Vagina (tissue), 2 donors: ENCODE measurements at regions of chr11 and their contacts with region 1.

Region 1: GRCh38 chr11:117107701-117108590 is 9.7 kb upstream of the SIK3 start:
- DNase-seq: no peak
- H3K4me3 ChIP-seq: no peak overlapping the region
- H3K27ac ChIP-seq: no peak overlapping the region
- H3K4me1 ChIP-seq: no peaks in the 10 kb centered on the region
- H3K27me3 ChIP-seq: no peaks in the 10 kb centered on the region
- CTCF ChIP-seq: no peak
- POLR2A ChIP-seq: no peak

Region 2: DNA sequence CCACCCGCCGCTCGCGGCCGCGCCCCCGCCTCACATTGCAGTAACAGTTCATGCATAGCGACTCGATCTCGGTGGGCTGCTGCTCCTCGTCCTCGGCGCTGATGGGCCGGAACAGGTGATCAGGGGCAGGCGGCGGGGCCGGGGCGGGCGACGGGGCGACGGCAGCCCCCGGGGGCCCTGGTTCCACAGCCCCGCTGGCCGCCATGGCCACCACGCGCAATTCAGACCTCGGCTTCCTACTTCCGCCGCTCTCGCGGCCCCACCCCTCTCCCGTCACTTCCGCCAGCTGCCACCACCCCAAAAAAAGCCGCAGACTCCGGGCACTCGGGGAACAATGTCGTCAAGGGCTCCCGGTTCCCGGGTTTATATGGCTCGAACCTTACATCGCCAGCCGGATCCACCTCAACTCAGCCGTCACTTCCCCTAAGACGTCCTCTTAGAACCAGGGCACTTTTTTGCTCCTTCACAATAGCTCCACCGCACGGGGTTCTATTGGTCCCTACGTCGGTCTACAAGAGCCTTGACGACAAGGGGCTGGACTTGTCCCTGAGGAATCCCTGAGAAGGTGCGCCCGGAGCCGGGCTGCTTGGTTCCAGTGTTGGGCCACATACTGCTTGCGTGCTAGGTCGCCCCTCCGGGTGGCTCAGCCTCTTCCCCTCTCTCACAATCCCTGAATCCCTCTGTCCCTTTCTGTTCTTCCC is 320.0 kb before region 1 on chr11 and contains the start of gene ZPR1:
- intact Hi-C with region 1: loop called (anchors 2 kb)
- DNase-seq: no peak
- H3K4me3 ChIP-seq: peak within 1 kb of the TSS; percentile 87 to 99
- H3K27ac ChIP-seq: peak within 1 kb of the TSS; percentile 76
- H3K4me1 ChIP-seq: peaks cover 27% of the 10 kb centered on the region
- H3K27me3 ChIP-seq: no peaks in the 10 kb centered on the region
- CTCF ChIP-seq: no peak
- POLR2A ChIP-seq: peak in 1 of 2 donors; percentile 23
- total RNA-seq, gene ZPR1: 19.4 TPM

Region 3: DNA sequence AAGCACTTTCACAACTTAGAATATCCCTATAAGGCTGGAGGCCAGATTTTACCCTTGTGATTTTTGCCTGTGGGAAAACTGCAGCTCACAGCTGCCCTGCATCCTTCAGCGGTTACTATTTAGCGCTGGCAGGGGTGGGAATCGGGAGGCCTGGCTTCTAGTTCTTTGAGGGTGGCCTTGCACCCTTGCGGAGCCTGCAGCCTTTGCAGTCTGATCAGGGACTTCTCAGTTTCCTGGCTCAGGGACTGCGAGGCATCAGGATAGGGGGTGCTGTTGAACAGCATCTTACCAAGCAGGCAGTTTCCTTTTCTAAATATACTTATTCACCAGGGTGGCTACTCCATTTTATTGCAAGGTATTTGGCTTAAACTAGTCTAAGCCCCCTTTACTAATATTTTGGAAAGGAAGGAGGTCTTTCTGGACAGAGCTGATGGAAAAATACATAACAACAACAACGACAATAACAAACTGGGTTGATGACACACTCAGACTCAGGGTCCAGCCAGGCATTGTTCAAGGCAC is 267.7 kb before region 1 on chr11:
- intact Hi-C with region 1: no loop called
- DNase-seq: no peak
- H3K4me3 ChIP-seq: no peak overlapping the region
- H3K27ac ChIP-seq: no peak overlapping the region
- H3K4me1 ChIP-seq: peaks cover 6% of the 10 kb centered on the region
- H3K27me3 ChIP-seq: no peaks in the 10 kb centered on the region
- CTCF ChIP-seq: no peak
- POLR2A ChIP-seq: no peak

Region 4: DNA sequence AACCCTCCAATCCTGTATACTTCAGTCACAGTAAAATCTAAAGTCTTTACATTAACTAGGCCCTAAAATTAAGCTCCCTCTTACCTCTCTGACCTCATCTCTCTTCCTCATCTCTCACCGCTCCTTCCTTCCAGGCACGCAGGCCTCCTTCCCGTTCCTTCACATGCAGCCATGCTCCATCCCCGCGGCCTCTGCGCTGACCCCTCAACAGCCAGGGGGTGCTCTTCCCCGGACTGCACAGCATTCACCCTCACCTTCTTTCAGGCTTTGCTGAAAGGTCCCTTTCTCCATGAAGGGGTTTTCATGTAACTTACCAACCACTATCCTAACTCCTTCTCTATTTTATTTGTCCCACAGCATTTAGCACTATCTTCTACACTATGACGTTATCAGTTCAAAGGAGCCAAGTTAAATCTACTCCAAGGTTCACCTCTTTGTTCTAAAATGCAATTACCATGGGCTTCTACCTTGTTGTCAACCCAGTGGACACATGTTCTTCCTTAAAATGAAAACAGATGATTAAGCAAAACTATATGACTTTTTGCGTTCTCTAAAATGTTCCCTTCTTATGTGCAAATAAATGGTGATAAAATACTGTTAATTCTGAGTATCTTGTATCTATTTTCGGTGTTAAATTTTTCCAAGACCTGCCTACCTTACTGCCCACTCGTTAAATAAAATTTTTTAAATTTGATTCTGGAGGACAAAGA is 212.7 kb before region 1 on chr11:
- intact Hi-C with region 1: loop called (anchors 5 kb)
- DNase-seq: no peak
- H3K4me3 ChIP-seq: no peak overlapping the region
- H3K27ac ChIP-seq: no peak overlapping the region
- H3K4me1 ChIP-seq: no peaks in the 10 kb centered on the region
- H3K27me3 ChIP-seq: no peaks in the 10 kb centered on the region
- CTCF ChIP-seq: peak in 1 of 3 experiments; percentile 30
- POLR2A ChIP-seq: no peak

Region 5: GRCh38 chr11:117226388-117227385 is 118.7 kb after region 1 on chr11:
- intact Hi-C with region 1: loop called (anchors 10 kb)
- DNase-seq: no peak
- H3K4me3 ChIP-seq: no peak overlapping the region
- H3K27ac ChIP-seq: no peak overlapping the region
- H3K4me1 ChIP-seq: peaks cover 36% of the 10 kb centered on the region
- H3K27me3 ChIP-seq: no peaks in the 10 kb centered on the region
- CTCF ChIP-seq: peak; percentile 74 to 85 (median 81)
- POLR2A ChIP-seq: no peak

Region 6: GRCh38 chr11:117269856-117270255 is 161.9 kb after region 1 on chr11:
- intact Hi-C with region 1: no loop called
- DNase-seq: no peak
- H3K4me3 ChIP-seq: no peak overlapping the region
- H3K27ac ChIP-seq: no peak overlapping the region
- H3K4me1 ChIP-seq: no peaks in the 10 kb centered on the region
- H3K27me3 ChIP-seq: no peaks in the 10 kb centered on the region
- CTCF ChIP-seq: no peak
- POLR2A ChIP-seq: no peak